ENCODE measurements at regions of chr16 and their contacts with region 1.

Region 1: DNA sequence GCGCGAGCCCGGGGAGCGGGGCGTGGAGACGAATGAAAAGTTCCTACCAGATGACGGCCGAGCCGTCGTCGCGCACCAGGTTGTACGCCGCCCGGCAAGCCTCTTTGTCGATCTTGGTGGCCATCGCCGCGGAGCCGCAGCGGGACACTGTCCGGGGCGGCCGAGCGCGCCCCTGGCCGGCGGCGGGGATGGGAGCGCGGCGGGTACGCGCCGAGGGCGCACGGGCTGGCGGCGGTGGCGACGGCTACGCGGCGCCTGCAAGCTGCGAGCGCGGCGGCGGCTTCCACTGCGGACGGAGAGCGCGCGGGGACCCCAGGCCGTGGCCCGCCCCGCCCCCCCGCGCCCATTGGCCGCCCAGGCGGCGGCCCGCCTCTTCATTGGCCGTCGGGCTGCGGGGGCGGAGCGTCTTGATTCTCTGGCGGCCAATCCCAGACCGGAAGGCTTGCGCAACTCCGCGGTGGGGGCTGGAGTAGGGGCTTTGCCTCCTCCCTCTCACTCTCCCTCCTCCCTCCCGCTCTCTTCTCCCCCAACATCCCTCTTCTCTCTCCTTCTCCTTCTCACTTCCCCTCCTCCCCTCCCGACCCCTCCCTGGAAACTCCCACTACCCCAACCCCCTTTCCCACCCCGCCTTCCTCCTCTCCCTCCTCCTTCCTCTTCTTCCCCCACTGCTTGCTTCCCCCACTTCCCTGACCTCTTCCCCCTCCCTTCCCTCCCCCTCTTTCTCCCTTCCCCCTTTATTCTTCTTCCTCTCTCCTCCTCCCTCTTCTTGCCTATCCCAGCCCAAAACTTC is at the start of gene COTL1:
- DNase-seq: peak; percentile 98
- H3K4me3 ChIP-seq: peak within 1 kb of the TSS; percentile 68
- H3K27ac ChIP-seq: no peak within 1 kb of the TSS
- H3K4me1 ChIP-seq: peaks cover 25% of the 10 kb centered on the region
- H3K27me3 ChIP-seq: no peaks in the 10 kb centered on the region
- CTCF ChIP-seq: no peak
- total RNA-seq, gene COTL1: 34.1 and 35.9 TPM in 2 replicates

Region 2: GRCh38 chr16:84511180-84511824 is 106.7 kb before region 1 on chr16:
- CTCF ChIA-PET with region 1: no interaction called
- POLR2A ChIA-PET with region 1: no interaction called
- intact Hi-C with region 1: loop called (anchors 1 kb)
- DNase-seq: peak; percentile 88
- H3K4me3 ChIP-seq: no peak overlapping the region
- H3K27ac ChIP-seq: no peak overlapping the region
- H3K4me1 ChIP-seq: no peaks in the 10 kb centered on the region
- H3K27me3 ChIP-seq: no peaks in the 10 kb centered on the region
- CTCF ChIP-seq: peak; percentile 97

Region 3: GRCh38 chr16:84829168-84829965 is 211.4 kb after region 1 on chr16:
- CTCF ChIA-PET with region 1: no interaction called
- POLR2A ChIA-PET with region 1: no interaction called
- intact Hi-C with region 1: no loop called
- DNase-seq: no peak
- H3K4me3 ChIP-seq: no peak overlapping the region
- H3K27ac ChIP-seq: no peak overlapping the region
- H3K4me1 ChIP-seq: no peaks in the 10 kb centered on the region
- H3K27me3 ChIP-seq: no peaks in the 10 kb centered on the region
- CTCF ChIP-seq: no peak